Mammary epithelial cell (primary cell): ENCODE measurements at regions of chr3 and their contacts with region 1.

Region 1: GRCh38 chr3:89098964-89099585 is 8.3 kb upstream of the EPHA3 start:
- DNase-seq: peak; percentile 46
- H3K4me3 ChIP-seq: no peak overlapping the region
- H3K27ac ChIP-seq: no peak overlapping the region
- H3K4me1 ChIP-seq: peaks cover 8% of the 10 kb centered on the region
- H3K27me3 ChIP-seq: no peaks in the 10 kb centered on the region
- CTCF ChIP-seq: peak; percentile 94 to 98

Region 2: DNA sequence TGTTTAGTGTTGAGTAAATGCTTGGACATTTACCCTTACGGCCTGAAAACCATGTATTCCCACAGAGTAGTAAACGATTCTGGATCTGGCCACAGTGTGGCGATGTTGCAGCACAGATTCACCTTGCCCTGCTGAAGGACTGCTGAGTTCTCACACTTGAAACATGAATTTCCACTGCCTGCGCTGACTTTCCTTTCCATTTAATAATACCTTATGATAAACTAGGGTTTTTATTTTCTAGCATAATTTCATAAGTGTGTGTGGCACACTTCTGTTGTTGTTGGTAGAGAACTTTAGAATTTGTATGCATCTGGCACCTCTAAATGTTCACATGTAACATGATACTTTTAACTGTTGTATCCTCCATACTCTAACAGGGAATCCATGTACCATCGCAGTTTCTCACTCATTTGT is 895.4 kb before region 1 on chr3:
- CTCF ChIA-PET with region 1: no interaction called
- dilution Hi-C with region 1: no loop called
- in situ Hi-C with region 1: loop called in 1 of 2 experiments (anchors 25 kb)
- intact Hi-C with region 1: loop called (anchors 5 kb)
- DNase-seq: peak; percentile 42
- H3K4me3 ChIP-seq: no peak overlapping the region
- H3K27ac ChIP-seq: no peak overlapping the region
- H3K4me1 ChIP-seq: no peaks in the 10 kb centered on the region
- H3K27me3 ChIP-seq: no peaks in the 10 kb centered on the region
- CTCF ChIP-seq: peak; percentile 84 to 90

Region 3: DNA sequence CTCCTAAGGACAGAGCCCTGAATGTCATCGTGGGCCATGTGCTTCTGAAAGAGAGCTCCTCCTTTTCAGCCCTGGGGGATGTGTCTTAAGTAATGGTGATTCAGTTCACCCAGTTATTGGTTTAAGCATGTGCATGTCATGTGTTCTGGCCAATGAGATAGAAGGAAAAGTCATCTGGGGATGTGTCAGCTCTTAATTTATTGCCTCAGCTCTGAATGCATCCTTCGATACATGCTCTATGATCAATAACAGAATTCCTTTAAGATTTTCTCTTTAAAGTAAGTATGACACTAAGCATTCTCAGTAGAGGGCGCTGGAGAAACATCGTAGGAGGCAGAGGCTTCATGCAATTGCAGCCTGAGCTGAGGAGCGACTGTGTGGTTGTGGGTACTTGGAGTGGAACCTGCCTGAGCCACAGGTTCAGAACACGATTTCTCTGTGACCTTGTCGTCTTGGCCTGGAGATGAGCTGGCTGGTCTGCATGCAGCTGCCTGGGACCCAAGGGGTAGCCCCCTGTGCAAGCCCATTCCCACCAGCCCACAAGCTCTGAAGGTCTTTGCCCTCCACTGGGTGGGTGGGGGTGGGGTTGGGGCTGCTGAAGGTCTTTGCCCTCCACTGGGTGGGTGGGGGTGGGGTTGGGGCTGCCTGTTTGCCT is 879.8 kb before region 1 on chr3:
- CTCF ChIA-PET with region 1: no interaction called
- dilution Hi-C with region 1: no loop called
- in situ Hi-C with region 1: loop called in 1 of 2 experiments (anchors 25 kb)
- intact Hi-C with region 1: loop called (anchors 1 kb)
- DNase-seq: peak; percentile 48
- H3K4me3 ChIP-seq: no peak overlapping the region
- H3K27ac ChIP-seq: no peak overlapping the region
- H3K4me1 ChIP-seq: no peaks in the 10 kb centered on the region
- H3K27me3 ChIP-seq: no peaks in the 10 kb centered on the region
- CTCF ChIP-seq: peak; percentile 62 to 80

Region 4: GRCh38 chr3:88621589-88621988 is 477.5 kb before region 1 on chr3:
- CTCF ChIA-PET with region 1: no interaction called
- dilution Hi-C with region 1: no loop called
- in situ Hi-C with region 1: no loop called
- intact Hi-C with region 1: loop called (anchors 5 kb)
- DNase-seq: no peak
- H3K4me3 ChIP-seq: no peak overlapping the region
- H3K27ac ChIP-seq: no peak overlapping the region
- H3K4me1 ChIP-seq: no peaks in the 10 kb centered on the region
- H3K27me3 ChIP-seq: no peaks in the 10 kb centered on the region
- CTCF ChIP-seq: no peak

Region 5: GRCh38 chr3:88641033-88641604 is 458.0 kb before region 1 on chr3:
- CTCF ChIA-PET with region 1: no interaction called
- dilution Hi-C with region 1: no loop called
- in situ Hi-C with region 1: no loop called
- intact Hi-C with region 1: loop called (anchors 1 kb)
- DNase-seq: peak; percentile 6
- H3K4me3 ChIP-seq: no peak overlapping the region
- H3K27ac ChIP-seq: no peak overlapping the region
- H3K4me1 ChIP-seq: no peaks in the 10 kb centered on the region
- H3K27me3 ChIP-seq: no peaks in the 10 kb centered on the region
- CTCF ChIP-seq: peak in 1 of 2 donors; percentile 44

Region 6: DNA sequence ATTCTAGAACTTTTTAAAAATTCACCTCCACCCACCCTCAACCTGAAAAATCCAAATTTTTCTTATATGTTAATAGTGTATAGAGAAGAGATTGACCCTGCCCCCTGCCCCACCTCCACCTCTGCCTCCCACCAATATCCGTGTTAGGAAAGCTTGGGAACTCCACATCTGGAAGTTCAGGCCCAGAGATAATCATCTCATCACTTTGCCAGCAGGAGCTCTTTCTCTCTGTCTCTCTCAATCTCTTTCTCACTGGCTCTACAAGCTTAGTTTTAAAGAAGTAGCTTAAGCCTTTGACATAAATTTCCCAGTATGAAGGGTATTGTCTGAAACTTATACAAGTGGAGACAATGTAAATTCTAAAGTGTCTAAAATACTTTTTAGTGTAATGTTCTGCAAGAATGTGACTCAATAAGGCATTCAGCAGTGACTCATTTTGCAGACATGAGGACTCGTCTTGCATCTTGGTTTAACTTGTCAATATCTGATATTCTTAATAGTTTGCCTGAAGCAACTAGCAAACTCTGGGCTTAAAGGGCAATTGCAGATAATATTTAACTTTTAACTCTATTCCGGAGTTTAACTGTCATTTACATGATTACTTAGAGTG is 291.5 kb before region 1 on chr3:
- CTCF ChIA-PET with region 1: interaction called, 3 read pairs
- dilution Hi-C with region 1: no loop called
- in situ Hi-C with region 1: no loop called
- intact Hi-C with region 1: loop called (anchors 2 kb)
- DNase-seq: peak; percentile 72
- H3K4me3 ChIP-seq: no peak overlapping the region
- H3K27ac ChIP-seq: peak overlapping the region; percentile 41
- H3K4me1 ChIP-seq: peaks cover 26% of the 10 kb centered on the region
- H3K27me3 ChIP-seq: no peaks in the 10 kb centered on the region
- CTCF ChIP-seq: no peak

Region 7: DNA sequence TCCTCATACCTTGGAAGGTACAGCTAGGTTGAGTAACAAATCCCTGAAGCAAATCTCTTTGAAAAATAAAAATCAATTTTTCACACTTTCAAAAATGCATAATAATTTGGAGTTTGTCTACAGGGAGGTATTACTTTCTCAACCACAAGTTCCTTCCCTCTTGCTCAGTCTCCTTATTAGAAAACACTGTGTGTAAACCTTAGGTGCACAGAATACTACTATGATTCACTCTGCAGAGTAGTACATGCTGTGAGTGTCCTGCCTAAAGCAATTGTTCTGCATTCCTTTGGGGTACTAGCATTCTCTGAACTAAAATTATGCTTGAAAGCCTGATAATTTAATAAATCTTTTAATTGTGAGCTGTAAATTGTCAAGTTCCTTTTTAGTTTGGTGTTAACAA is 107.6 kb before region 1 on chr3:
- CTCF ChIA-PET with region 1: no interaction called
- dilution Hi-C with region 1: no loop called
- in situ Hi-C with region 1: no loop called
- intact Hi-C with region 1: loop called (anchors 10 kb)
- DNase-seq: peak; percentile 71
- H3K4me3 ChIP-seq: no peak overlapping the region
- H3K27ac ChIP-seq: peak overlapping the region; percentile 54
- H3K4me1 ChIP-seq: peaks cover 42% of the 10 kb centered on the region
- H3K27me3 ChIP-seq: no peaks in the 10 kb centered on the region
- CTCF ChIP-seq: no peak

Region 8: GRCh38 chr3:89113903-89114840 is 15.1 kb after region 1 on chr3:
- CTCF ChIA-PET with region 1: no interaction called
- dilution Hi-C with region 1: no loop called
- in situ Hi-C with region 1: no loop called
- intact Hi-C with region 1: no loop called
- DNase-seq: peak; percentile 84
- H3K4me3 ChIP-seq: peak overlapping the region; percentile 0 to 67 (median 55)
- H3K27ac ChIP-seq: no peak overlapping the region
- H3K4me1 ChIP-seq: peaks cover 12% of the 10 kb centered on the region
- H3K27me3 ChIP-seq: peaks cover 5% of the 10 kb centered on the region
- CTCF ChIP-seq: peak; percentile 53 to 88